ENCODE measurements at regions of chr3 and their contacts with region 1.

Region 1: DNA sequence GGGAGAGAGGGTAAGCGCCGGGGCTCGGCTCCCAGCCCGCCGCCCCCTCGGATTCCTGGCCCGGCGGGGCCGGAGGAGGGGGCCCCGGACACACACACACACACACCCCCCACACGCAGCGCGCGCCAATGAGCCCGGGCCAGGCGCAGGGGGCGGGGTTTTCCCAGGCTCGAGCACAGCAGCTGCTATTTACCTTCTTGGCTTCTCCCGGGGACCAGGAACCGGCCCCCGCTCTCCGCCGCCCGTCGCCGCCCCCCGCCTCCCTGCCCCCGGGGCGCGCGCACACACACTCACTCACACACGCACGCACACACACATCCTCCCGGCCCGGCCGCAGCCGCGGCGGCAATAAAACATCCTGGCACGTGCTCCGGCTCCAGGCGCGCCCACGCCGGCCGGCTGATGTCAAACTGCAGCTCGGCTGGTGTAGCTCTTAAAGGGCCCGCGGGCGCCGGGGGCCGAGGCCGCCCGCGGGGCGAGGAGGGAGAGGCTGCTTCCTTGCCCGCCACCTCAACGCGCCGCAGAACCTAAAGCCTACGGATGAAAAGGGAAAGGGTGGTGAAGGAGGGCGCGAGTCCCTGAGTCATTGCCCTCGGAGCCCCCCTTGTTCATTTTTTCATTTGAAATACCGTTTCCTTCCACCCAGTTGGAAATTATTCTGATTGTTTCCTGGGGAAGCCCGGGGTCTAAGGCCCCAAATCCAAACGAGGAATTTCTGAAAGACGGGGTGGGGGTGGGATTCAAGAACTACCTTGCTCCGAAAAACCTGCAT is 1.0 kb upstream of the HES1 start:
- DNase-seq: peak; percentile 95 to 96 (median 95)
- ATAC-seq: peak; percentile 60 to 81 (median 70)
- H3K4me3 ChIP-seq: peak overlapping the region; percentile 44 to 92 (median 75)
- H3K27ac ChIP-seq: peak overlapping the region; percentile 90 to 99 (median 97)
- H3K4me1 ChIP-seq: peaks cover 4 to 70% (median 45%) of the 10 kb centered on the region in 12 donors
- H3K27me3 ChIP-seq: peaks cover 0 to 63% (median 0%) of the 10 kb centered on the region in 9 donors
- CTCF ChIP-seq: no peak
- POLR2A ChIP-seq: peak in 1 of 2 donors; percentile 48

Region 2: GRCh38 chr3:193788189-193788991 is 346.6 kb before region 1 on chr3:
- intact Hi-C with region 1: loop called in 9 of 10 experiments (anchors 1 to 5 kb)
- DNase-seq: peak; percentile 64 to 75 (median 70)
- ATAC-seq: peak; percentile 75 to 96 (median 94)
- H3K4me3 ChIP-seq: no peak overlapping the region
- H3K27ac ChIP-seq: peak overlapping the region in 3 of 12 donors; percentile 9 to 15 (median 9)
- H3K4me1 ChIP-seq: peaks cover 0 to 18% (median 8%) of the 10 kb centered on the region in 12 donors
- H3K27me3 ChIP-seq: peaks cover 0 to 60% (median 4%) of the 10 kb centered on the region in 9 donors
- CTCF ChIP-seq: peak; percentile 66 to 89 (median 82)
- POLR2A ChIP-seq: no peak

Region 3: GRCh38 chr3:193982258-193982659 is 152.7 kb before region 1 on chr3:
- intact Hi-C with region 1: loop called in 1 of 10 experiments (anchors 5 kb)
- DNase-seq: peak; percentile 82 to 89 (median 86)
- ATAC-seq: peak; percentile 78 to 88 (median 86)
- H3K4me3 ChIP-seq: no peak overlapping the region
- H3K27ac ChIP-seq: peak overlapping the region in 4 of 12 donors; percentile 10 to 26 (median 16)
- H3K4me1 ChIP-seq: peaks cover 0 to 58% (median 32%) of the 10 kb centered on the region in 12 donors
- H3K27me3 ChIP-seq: peaks cover 0 to 8% (median 0%) of the 10 kb centered on the region in 9 donors
- CTCF ChIP-seq: no peak
- POLR2A ChIP-seq: no peak

Region 4: GRCh38 chr3:194070634-194071409 is 64.1 kb before region 1 on chr3:
- intact Hi-C with region 1: loop called (anchors 1 to 10 kb)
- DNase-seq: peak; percentile 88 to 93 (median 93)
- ATAC-seq: peak; percentile 89 to 92 (median 92)
- H3K4me3 ChIP-seq: peak overlapping the region; percentile 8 to 64 (median 53)
- H3K27ac ChIP-seq: peak overlapping the region; percentile 67 to 97 (median 86)
- H3K4me1 ChIP-seq: peaks cover 3 to 23% (median 15%) of the 10 kb centered on the region in 12 donors
- H3K27me3 ChIP-seq: peaks cover 0 to 29% (median 0%) of the 10 kb centered on the region in 9 donors
- CTCF ChIP-seq: no peak
- POLR2A ChIP-seq: no peak

Region 5: GRCh38 chr3:194176274-194176991 is 41.5 kb after region 1 on chr3:
- intact Hi-C with region 1: no loop called
- DNase-seq: no peak
- ATAC-seq: no peak
- H3K4me3 ChIP-seq: no peak overlapping the region
- H3K27ac ChIP-seq: no peak overlapping the region
- H3K4me1 ChIP-seq: peaks cover 0 to 16% (median 5%) of the 10 kb centered on the region in 12 donors
- H3K27me3 ChIP-seq: no peaks in the 10 kb centered on the region
- CTCF ChIP-seq: no peak
- POLR2A ChIP-seq: no peak

Region 6: GRCh38 chr3:194204042-194204987 is 69.4 kb after region 1 on chr3:
- intact Hi-C with region 1: no loop called
- DNase-seq: no peak
- ATAC-seq: peak in 2 of 4 donors; percentile 38 to 41
- H3K4me3 ChIP-seq: peak overlapping the region in 9 of 12 donors; percentile 13 to 51 (median 32)
- H3K27ac ChIP-seq: no peak overlapping the region
- H3K4me1 ChIP-seq: peaks cover 0 to 22% (median 4%) of the 10 kb centered on the region in 12 donors
- H3K27me3 ChIP-seq: peaks cover 0 to 36% (median 16%) of the 10 kb centered on the region in 9 donors
- CTCF ChIP-seq: no peak
- POLR2A ChIP-seq: no peak

Region 7: GRCh38 chr3:194250098-194251002 is 115.4 kb after region 1 on chr3:
- intact Hi-C with region 1: loop called in 1 of 10 experiments (anchors 5 kb)
- DNase-seq: peak; percentile 83 to 93 (median 88)
- ATAC-seq: peak; percentile 50 to 82 (median 72)
- H3K4me3 ChIP-seq: peak overlapping the region in 5 of 12 donors; percentile 4 to 23 (median 19)
- H3K27ac ChIP-seq: peak overlapping the region in 3 of 12 donors; percentile 9 to 29 (median 12)
- H3K4me1 ChIP-seq: peaks cover 3 to 38% (median 28%) of the 10 kb centered on the region in 12 donors
- H3K27me3 ChIP-seq: no peaks in the 10 kb centered on the region
- CTCF ChIP-seq: no peak
- POLR2A ChIP-seq: no peak

Region 8: DNA sequence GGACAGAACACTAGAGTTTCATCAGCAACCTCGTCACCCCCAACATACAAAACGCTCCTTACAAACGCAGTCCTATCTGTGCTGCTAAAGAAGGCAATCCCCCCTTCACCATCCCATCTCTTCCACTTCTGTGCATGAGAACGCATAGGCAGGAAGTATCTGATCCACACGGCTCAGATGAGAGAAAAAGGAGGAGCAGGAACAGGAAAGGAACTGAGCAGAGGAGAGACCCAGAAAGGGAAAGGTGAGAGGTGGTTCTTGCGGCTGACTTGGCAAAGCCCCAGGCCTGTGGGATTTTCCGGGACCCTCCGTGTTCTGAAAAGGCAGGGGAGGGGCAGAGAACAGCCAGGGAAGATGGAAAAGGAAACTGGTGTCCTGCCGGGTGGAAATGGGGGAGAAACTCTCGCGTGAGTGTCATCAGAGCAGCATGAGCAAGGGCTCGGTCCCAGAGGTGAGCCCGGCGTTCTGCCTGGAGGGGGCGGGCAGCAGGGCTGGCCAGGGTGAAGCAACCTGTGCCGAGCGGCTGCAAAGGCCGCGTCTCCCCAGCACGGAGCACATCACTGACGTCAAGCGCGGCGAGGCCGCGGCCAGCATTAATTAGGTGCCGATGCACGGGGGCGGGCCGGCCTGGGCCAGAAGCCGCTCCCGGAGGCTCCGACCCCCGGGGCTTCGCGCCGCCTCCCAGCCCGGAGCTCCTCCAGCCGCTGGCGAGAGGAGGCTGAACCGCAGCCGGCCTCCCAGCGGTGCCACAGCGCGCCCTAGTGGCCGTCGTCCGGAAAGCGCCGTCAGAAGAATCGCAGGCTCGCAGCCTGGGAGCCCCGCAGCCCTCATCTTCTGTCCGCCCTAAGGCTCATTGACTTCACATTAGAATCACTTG is 180.4 kb after region 1 on chr3:
- intact Hi-C with region 1: loop called (anchors 1 to 5 kb)
- DNase-seq: peak; percentile 83 to 92 (median 87)
- ATAC-seq: peak; percentile 61 to 91 (median 90)
- H3K4me3 ChIP-seq: peak overlapping the region; percentile 3 to 63 (median 50)
- H3K27ac ChIP-seq: peak overlapping the region in 6 of 12 donors; percentile 13 to 61 (median 32)
- H3K4me1 ChIP-seq: peaks cover 0 to 39% (median 19%) of the 10 kb centered on the region in 12 donors
- H3K27me3 ChIP-seq: peaks cover 0 to 54% (median 14%) of the 10 kb centered on the region in 9 donors
- CTCF ChIP-seq: peak; percentile 95 to 99 (median 98)
- POLR2A ChIP-seq: no peak